ENCODE measurements at regions of chr3 and their contacts with region 1.

Region 1: GRCh38 chr3:118987477-118987876 is 47.2 kb downstream of the IGSF11 start:
- DNase-seq: peak; percentile 24
- H3K4me3 Mint-ChIP-seq: no peak overlapping the region
- H3K27ac Mint-ChIP-seq: no peak overlapping the region
- H3K4me1 Mint-ChIP-seq: no peaks in the 10 kb centered on the region
- H3K27me3 Mint-ChIP-seq: peaks cover 43% of the 10 kb centered on the region
- CTCF ChIP-seq: no peak

Region 2: DNA sequence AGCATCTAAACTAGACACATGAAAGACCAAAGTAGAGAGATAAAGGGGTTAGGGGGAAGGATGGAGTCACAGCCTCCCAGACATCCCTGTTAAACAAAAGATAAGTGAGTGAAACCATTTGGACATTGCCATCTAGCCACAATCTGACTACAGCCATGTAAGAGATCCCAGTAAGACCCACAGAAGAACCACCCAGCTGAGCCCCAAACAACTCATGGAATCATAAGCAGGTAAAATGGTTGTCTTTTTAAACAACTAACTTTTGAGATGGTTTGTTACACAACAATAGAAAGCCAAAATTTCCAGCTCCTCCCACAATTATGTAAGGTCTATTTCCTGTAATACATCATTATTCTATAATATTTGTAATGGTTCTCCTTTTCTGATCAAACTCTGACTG is 390.3 kb before region 1 on chr3:
- CTCF ChIA-PET with region 1: no interaction called
- POLR2A ChIA-PET with region 1: no interaction called
- intact Hi-C with region 1: no loop called
- DNase-seq: no peak
- H3K4me3 Mint-ChIP-seq: no peak overlapping the region
- H3K27ac Mint-ChIP-seq: no peak overlapping the region
- H3K4me1 Mint-ChIP-seq: no peaks in the 10 kb centered on the region
- H3K27me3 Mint-ChIP-seq: no peaks in the 10 kb centered on the region
- CTCF ChIP-seq: no peak

Region 3: GRCh38 chr3:118938183-118938961 is 49.1 kb before region 1 on chr3:
- CTCF ChIA-PET with region 1: no interaction called
- POLR2A ChIA-PET with region 1: no interaction called
- intact Hi-C with region 1: loop called (anchors 10 kb)
- DNase-seq: peak; percentile 63
- H3K4me3 Mint-ChIP-seq: peak overlapping the region; percentile 22
- H3K27ac Mint-ChIP-seq: no peak overlapping the region
- H3K4me1 Mint-ChIP-seq: peaks cover 14% of the 10 kb centered on the region
- H3K27me3 Mint-ChIP-seq: no peaks in the 10 kb centered on the region
- CTCF ChIP-seq: no peak

Region 4: DNA sequence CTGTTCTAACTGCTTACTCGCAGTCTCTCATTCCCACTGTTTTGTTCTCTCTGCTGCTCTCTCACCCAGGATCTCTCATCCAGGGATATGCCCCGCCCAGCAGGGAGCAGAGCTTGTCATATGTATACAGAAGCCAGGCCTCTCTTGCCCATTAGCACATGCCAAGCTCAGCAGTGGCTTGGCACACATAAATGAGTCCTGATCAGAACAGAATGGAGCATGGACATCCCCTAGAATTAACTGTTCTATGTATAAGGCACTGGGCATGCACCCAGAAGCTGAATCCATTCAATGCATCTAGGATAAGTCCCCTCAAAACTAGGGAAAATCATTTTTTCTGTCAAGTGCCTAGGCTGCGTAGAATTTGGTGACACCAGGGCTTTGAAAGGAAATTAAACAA is 14.4 kb before region 1 on chr3:
- CTCF ChIA-PET with region 1: no interaction called
- POLR2A ChIA-PET with region 1: no interaction called
- intact Hi-C with region 1: no loop called
- DNase-seq: no peak
- H3K4me3 Mint-ChIP-seq: no peak overlapping the region
- H3K27ac Mint-ChIP-seq: no peak overlapping the region
- H3K4me1 Mint-ChIP-seq: no peaks in the 10 kb centered on the region
- H3K27me3 Mint-ChIP-seq: peaks cover 66% of the 10 kb centered on the region
- CTCF ChIP-seq: no peak

Region 5: GRCh38 chr3:119018690-119019463 is 31.4 kb after region 1 on chr3:
- CTCF ChIA-PET with region 1: no interaction called
- POLR2A ChIA-PET with region 1: no interaction called
- intact Hi-C with region 1: no loop called
- DNase-seq: no peak
- H3K4me3 Mint-ChIP-seq: no peak overlapping the region
- H3K27ac Mint-ChIP-seq: no peak overlapping the region
- H3K4me1 Mint-ChIP-seq: peaks cover 6% of the 10 kb centered on the region
- H3K27me3 Mint-ChIP-seq: peaks cover 53% of the 10 kb centered on the region
- CTCF ChIP-seq: no peak

Measured in MCF 10A (cell line).